HCT116 (cell line): ENCODE measurements at regions of chr1 and their contacts with region 1.

Region 1: DNA sequence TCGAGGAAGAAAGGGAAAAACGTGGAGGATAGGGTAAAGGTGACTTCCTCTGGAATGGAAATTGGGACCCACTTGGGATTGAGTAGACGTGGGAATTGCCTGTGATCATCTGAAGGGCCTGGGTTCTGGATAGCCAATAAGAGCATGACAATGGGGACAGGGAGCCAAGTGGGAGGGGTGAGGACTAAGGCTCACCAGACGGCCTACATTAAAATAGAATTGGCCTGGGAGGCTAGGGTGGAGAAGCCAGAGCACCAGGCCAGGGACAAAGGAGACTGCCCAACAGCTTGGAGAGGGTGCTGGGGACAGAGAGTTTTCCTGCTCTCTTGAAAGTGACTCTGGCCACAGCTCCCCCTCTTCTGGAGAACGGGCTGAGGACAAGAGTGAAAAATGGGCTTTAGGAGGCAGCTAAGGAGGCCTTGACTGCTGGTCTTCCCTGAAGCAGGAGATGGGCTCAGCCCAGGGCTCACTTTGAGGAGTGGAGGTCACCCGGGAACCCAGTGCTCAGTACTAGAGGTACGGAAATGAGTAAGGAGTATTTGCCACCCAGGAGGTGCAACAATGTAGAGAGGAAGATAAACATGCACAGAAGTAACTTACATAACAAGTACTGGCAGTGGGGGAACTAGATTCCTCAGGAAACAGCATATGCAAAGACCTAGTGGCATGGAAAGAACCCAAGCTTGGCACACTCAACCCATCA is 18.8 kb downstream of the INKA2 start:
- DNase-seq: no peak
- ATAC-seq: no peak; the same call in 1 of the 2 replicates
- H3K4me3 ChIP-seq: no peak overlapping the region
- H3K27ac ChIP-seq: no peak overlapping the region
- H3K4me1 ChIP-seq: no peaks in the 10 kb centered on the region
- H3K27me3 ChIP-seq: no peaks in the 10 kb centered on the region
- CTCF ChIP-seq: no peak
- POLR2A ChIP-seq: no peak
- RAD21 ChIP-seq: no peak

Region 2: GRCh38 chr1:111747282-111747734 is 26.9 kb after region 1 on chr1:
- CTCF ChIA-PET with region 1: interaction called, 20 read pairs
- POLR2A ChIA-PET with region 1: no interaction called
- RAD21 ChIA-PET with region 1: no interaction called
- intact Hi-C with region 1: loop called (anchors 1 kb)
- DNase-seq: peak; percentile 90
- ATAC-seq: peak; percentile 96
- H3K4me3 ChIP-seq: no peak overlapping the region
- H3K27ac ChIP-seq: no peak overlapping the region
- H3K4me1 ChIP-seq: peaks cover 0 to 8% of the 10 kb centered on the region in 2 experiments; a peak in 2 of 4 replicates
- H3K27me3 ChIP-seq: peaks cover 4% of the 10 kb centered on the region; the same call in 1 of the 2 replicates
- CTCF ChIP-seq: peak; percentile 78 to 99 (median 81)
- POLR2A ChIP-seq: no peak
- RAD21 ChIP-seq: peak; percentile 86

Region 3: GRCh38 chr1:111755331-111756123 is 35.1 kb after region 1 on chr1 and contains the start of gene DDX20:
- CTCF ChIA-PET with region 1: interaction called, 20 read pairs
- POLR2A ChIA-PET with region 1: no interaction called
- RAD21 ChIA-PET with region 1: no interaction called
- intact Hi-C with region 1: loop called (anchors 2 kb)
- DNase-seq: peak; percentile 92
- ATAC-seq: peak; percentile 89
- H3K4me3 ChIP-seq: peak within 1 kb of the TSS; percentile 68 to 83
- H3K27ac ChIP-seq: peak within 1 kb of the TSS; percentile 89
- H3K4me1 ChIP-seq: peaks cover 11 to 18% of the 10 kb centered on the region in 2 experiments
- H3K27me3 ChIP-seq: no peaks in the 10 kb centered on the region
- CTCF ChIP-seq: peak; percentile 66 to 89 (median 85); a peak in 5 of 6 replicates
- POLR2A ChIP-seq: peak; percentile 70
- RAD21 ChIP-seq: peak; percentile 70
- total RNA-seq, gene DDX20: 14.9 TPM